T-cell (primary cell): ENCODE measurements at regions of chr3 and their contacts with region 1.

Region 1: DNA sequence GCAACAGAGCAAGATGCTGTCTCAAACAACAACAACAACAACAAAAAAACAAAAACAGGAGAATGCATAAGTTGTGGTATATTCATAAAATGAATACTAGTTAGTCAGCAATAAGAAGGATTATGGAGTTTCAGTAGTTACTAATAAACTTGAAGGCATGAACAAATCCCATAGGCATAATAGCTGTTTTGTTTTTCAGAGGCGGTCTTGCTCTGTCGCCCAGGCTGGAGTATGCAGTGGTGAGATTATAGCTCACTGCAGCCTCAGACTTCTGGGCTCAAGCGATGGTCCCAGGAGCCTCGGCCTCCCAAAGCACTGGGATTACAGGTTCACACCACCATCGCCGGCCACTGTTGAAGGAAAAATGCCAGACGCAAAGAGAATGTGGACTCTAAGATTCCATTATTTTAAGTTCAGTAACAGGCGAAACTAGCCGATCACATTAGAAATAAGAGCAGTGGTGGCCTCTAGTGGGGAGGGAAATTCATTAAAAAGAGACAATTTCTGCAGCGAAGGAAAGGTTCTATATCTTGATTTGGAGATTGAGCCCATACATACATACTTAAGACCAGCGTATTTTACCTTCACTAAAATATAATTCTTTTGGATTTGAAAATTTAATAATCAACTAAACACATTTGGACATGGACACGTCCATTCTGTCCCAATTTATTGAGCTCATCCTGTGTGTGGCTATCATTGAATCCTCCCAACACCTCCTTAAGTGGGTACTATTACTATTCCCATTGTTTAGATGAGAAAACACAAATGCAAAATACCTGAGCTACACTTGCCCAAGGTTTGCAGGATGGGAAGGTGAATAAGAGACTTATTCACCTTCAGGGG is 27.4 kb upstream of the HDAC11 start:
- DNase-seq: peak in 30 of 35 experiments; percentile 8 to 74 (median 42)
- ATAC-seq: peak; percentile 26 to 37 (median 30)
- H3K4me3 ChIP-seq: peak overlapping the region; percentile 15
- H3K4me3 Mint-ChIP-seq: peak overlapping the region; percentile 87 to 97 (median 95)
- H3K27ac ChIP-seq: peak overlapping the region; percentile 30
- H3K27ac Mint-ChIP-seq: peak overlapping the region; percentile 96 to 97
- H3K4me1 ChIP-seq: peaks cover 9 to 23% of the 10 kb centered on the region in 2 experiments
- H3K4me1 Mint-ChIP-seq: peaks cover 12 to 27% (median 21%) of the 10 kb centered on the region in 3 donors
- H3K27me3 ChIP-seq: peaks cover 0 to 6% of the 10 kb centered on the region in 2 experiments
- H3K27me3 Mint-ChIP-seq: no peaks in the 10 kb centered on the region

Region 2: DNA sequence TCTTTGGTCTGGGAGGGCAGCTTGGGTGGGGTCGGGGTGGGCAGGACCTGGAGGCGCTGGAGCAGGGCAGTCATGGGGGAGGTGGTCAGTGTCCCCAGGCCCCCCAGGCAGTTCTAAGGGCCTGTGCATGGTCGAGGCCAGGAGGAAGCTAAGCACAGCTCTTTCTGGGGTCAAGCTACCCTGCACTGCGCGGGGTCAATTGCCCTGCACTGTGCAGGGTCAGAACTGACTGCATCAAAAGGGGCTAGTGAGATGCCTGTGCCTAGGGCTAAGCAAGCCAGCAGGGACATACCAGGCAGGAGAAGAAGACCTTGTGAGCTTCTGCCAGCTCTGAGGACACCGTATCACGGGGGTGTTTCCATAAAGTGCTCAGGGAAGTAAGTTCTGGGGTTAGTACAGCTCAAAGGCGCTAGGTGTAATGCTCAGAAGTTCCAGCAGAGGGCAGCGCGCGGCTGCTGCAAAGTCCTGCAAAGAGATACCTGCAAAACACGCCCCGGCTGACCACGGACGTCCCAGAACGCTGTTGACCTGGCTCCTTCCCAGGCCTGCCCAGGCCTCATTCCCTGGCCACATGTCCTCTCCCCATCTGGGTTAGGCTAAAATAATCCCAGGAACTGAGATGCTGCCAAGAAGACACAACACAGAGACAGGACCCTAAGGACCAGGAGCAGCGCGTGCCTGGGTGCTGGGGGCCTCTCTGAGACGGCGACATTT is 360.7 kb before region 1 on chr3:
- CTCF ChIA-PET with region 1: interaction called, 6 to 26 read pairs
- POLR2A ChIA-PET with region 1: no interaction called
- DNase-seq: peak; percentile 37 to 88 (median 69)
- ATAC-seq: peak; percentile 80 to 86 (median 82)
- H3K4me3 ChIP-seq: no peak overlapping the region
- H3K4me3 Mint-ChIP-seq: no peak overlapping the region
- H3K27ac ChIP-seq: no peak overlapping the region
- H3K27ac Mint-ChIP-seq: no peak overlapping the region
- H3K4me1 ChIP-seq: peaks cover 0 to 7% of the 10 kb centered on the region in 2 experiments
- H3K4me1 Mint-ChIP-seq: peaks cover 2 to 15% (median 7%) of the 10 kb centered on the region in 3 donors
- H3K27me3 ChIP-seq: peaks cover 0 to 32% of the 10 kb centered on the region in 2 experiments
- H3K27me3 Mint-ChIP-seq: peaks cover 9 to 12% of the 10 kb centered on the region in 2 donors

Region 3: DNA sequence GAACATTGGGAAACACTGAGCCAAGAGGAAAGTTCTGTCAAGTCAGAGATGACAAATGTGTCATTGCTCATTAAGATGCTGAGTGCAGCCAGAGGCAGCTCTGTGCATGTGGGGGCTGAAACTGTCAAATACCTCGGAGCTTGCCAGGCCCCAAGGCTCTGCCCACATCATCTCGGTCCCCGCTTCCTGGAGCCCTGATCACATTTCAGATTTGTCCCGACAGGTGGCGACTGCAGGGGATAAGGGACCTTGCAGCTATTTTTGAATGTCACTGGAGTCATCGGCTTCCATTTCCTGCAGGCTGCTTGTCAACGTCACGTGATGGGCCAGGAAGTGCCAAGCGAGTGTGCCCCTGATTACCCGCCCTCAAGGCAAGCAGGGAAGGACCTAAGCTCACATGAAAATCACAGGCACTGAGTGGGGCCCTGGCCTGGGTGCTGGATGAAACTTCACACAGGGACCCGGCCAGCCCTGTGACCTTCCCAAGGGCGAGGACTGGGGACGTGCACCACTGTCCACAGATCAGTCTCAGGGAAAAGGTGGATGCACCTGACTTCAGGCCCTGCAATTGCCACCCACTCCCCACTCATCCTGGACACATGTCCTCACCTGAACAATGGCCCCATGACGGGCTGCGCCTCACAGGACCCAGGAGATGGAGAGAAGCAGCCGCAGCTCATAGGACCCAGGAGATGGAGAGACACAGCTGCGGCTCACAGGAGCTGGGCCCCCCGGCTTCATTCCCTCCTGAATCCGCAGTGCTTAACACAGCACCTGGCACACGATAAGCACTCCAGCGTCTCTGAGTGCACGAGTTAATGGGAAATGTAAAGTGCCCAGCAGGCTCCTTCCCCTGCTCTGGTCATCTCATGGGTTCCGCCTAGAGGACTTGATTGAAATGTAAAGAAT is 106.0 kb before region 1 on chr3:
- CTCF ChIA-PET with region 1: interaction called, 7 to 47 read pairs
- POLR2A ChIA-PET with region 1: no interaction called
- DNase-seq: peak; percentile 65 to 88 (median 79)
- ATAC-seq: peak; percentile 77 to 90 (median 83)
- H3K4me3 ChIP-seq: no peak overlapping the region
- H3K4me3 Mint-ChIP-seq: peak overlapping the region; percentile 13 to 69 (median 46)
- H3K27ac ChIP-seq: peak overlapping the region; percentile 33
- H3K27ac Mint-ChIP-seq: peak overlapping the region; percentile 97 to 99
- H3K4me1 ChIP-seq: peaks cover 37 to 71% of the 10 kb centered on the region in 2 experiments
- H3K4me1 Mint-ChIP-seq: peaks cover 50 to 63% (median 52%) of the 10 kb centered on the region in 3 donors
- H3K27me3 ChIP-seq: no peaks in the 10 kb centered on the region
- H3K27me3 Mint-ChIP-seq: no peaks in the 10 kb centered on the region

Region 4: DNA sequence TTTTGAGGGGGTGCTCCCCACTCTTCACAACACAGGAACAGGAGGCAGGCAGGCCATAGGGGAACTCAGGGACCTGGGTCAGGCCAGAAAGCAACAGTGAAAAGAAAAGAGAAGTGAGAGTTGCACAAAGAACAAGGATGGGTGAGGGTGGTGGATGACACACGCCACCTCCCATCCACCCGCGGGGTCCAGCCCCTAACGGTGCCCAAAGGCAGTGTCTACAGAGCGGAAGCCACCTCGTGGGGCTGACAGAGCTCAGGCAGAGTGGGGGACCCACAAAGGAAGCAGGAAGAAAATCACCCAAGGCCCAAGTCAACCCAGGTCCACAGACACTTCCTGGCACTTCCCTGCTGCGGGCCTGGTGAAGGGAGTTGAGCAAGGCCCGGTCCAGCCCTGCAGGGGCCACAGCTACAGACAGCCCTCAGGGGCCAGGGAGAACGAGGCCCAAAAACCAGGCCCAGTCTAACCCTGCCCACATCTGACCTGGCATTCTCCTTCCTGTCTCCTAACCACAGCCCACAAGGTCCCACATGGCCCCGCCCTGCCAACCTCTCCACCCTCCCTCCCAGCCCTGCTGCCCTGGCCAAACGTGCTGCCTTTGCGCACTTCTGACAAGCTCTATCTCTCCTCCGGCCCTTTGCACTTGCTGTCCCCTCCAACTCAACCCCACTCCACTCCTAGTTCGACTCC is 38.5 kb before region 1 on chr3:
- CTCF ChIA-PET with region 1: interaction called, 7 to 56 read pairs
- POLR2A ChIA-PET with region 1: interaction called, 5 to 6 read pairs
- DNase-seq: peak; percentile 57 to 84 (median 69)
- ATAC-seq: peak; percentile 87 to 92 (median 92)
- H3K4me3 ChIP-seq: peak overlapping the region; percentile 33 to 42
- H3K4me3 Mint-ChIP-seq: peak overlapping the region; percentile 68 to 82 (median 70)
- H3K27ac ChIP-seq: peak overlapping the region; percentile 85
- H3K27ac Mint-ChIP-seq: peak overlapping the region; percentile 94 to 99
- H3K4me1 ChIP-seq: peaks cover 49 to 83% of the 10 kb centered on the region in 2 experiments
- H3K4me1 Mint-ChIP-seq: peaks cover 68 to 76% (median 69%) of the 10 kb centered on the region in 3 donors
- H3K27me3 ChIP-seq: no peaks in the 10 kb centered on the region
- H3K27me3 Mint-ChIP-seq: no peaks in the 10 kb centered on the region

Region 5: GRCh38 chr3:13479581-13480339 is 27.0 kb after region 1 on chr3 and contains the start of gene HDAC11:
- CTCF ChIA-PET with region 1: interaction called in 1 of 2 experiments, 22 read pairs
- POLR2A ChIA-PET with region 1: interaction called in 1 of 2 experiments, 5 read pairs
- DNase-seq: peak; percentile 91 to 99 (median 96)
- ATAC-seq: peak; percentile 94 to 98 (median 96)
- H3K4me3 ChIP-seq: peak within 1 kb of the TSS; percentile 88 to 96
- H3K4me3 Mint-ChIP-seq: peak within 1 kb of the TSS; percentile 89 to 93 (median 91)
- H3K27ac ChIP-seq: peak within 1 kb of the TSS; percentile 91
- H3K27ac Mint-ChIP-seq: peak within 1 kb of the TSS; percentile 84 to 87
- H3K4me1 ChIP-seq: peaks cover 0 to 29% of the 10 kb centered on the region in 2 experiments
- H3K4me1 Mint-ChIP-seq: peaks cover 19 to 28% (median 20%) of the 10 kb centered on the region in 3 donors
- H3K27me3 ChIP-seq: peaks cover 0 to 3% of the 10 kb centered on the region in 2 experiments
- H3K27me3 Mint-ChIP-seq: no peaks in the 10 kb centered on the region
- total RNA-seq, gene HDAC11: 5.9 to 10.4 (median 7.9) TPM

Region 6: GRCh38 chr3:13574798-13575451 is 122.2 kb after region 1 on chr3:
- CTCF ChIA-PET with region 1: no interaction called
- POLR2A ChIA-PET with region 1: no interaction called
- DNase-seq: no peak
- ATAC-seq: no peak
- H3K4me3 ChIP-seq: no peak overlapping the region
- H3K4me3 Mint-ChIP-seq: no peak overlapping the region
- H3K27ac ChIP-seq: no peak overlapping the region
- H3K27ac Mint-ChIP-seq: no peak overlapping the region
- H3K4me1 ChIP-seq: no peaks in the 10 kb centered on the region
- H3K4me1 Mint-ChIP-seq: no peaks in the 10 kb centered on the region
- H3K27me3 ChIP-seq: peaks cover 0 to 20% of the 10 kb centered on the region in 2 experiments
- H3K27me3 Mint-ChIP-seq: peaks cover 0 to 3% of the 10 kb centered on the region in 2 donors